Activated T-helper 1 cell treated with anti-CD3 and anti-CD28 coated beads, Interleukin-12 subunit alpha, Interleukin-12 subunit beta, Interleukin-2, Interleukin-4 antibody, amounts not matched to agents 30 ng/mL and 10 ng/mL and 1 ng/mL, durations not matched to agents 14 hours and 24 hours and 36 hours (primary cell): ENCODE measurements at regions of chr12 and their contacts with region 1.

Region 1: DNA sequence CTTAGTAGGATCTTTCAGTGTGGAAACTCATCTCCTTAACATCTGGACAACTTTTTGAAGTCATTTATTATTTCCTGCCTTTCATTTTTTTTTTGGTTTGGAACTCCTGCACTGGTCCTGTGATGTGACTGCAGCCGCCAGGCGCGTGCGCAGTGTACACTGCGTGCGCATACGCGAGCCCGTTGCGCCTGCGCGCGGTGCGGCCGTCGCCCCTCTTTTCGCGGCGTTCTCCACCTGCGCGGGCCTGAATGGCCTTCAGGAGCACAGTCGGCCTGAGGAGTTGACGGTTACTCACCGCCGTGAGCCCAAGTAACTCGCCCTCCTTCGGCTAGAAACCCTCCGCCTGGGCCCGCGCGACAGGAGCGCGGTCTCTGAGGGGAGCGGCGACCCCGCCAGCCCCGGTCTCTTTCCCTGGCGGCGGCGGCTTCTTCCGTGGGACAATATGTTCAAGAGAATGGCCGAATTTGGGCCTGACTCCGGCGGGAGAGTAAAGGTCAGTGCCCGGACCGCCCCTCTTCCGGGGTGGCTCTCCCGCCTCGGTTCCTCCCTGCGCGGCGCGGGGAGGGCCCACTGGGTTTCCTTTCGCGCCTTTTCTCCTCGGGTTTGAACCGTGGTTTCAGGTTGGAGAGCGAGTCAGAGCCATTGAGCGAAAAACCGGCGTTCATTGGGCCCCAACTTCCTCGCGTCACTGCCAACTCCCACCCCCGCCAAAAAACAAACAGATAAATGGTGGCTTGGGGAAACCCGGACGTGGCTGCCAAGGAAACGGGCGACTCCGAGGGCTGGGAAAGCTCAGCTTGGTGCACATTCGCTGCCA is at the start of gene YEATS4:
- DNase-seq: peak; percentile 88
- H3K4me3 Mint-ChIP-seq: peak within 1 kb of the TSS; percentile 94
- H3K27ac Mint-ChIP-seq: peak within 1 kb of the TSS; percentile 89
- H3K4me1 Mint-ChIP-seq: peaks cover 33% of the 10 kb centered on the region
- H3K27me3 Mint-ChIP-seq: peaks cover 3% of the 10 kb centered on the region
- total RNA-seq, gene YEATS4: 45.2 and 47.2 TPM in 2 replicates

Region 2: GRCh38 chr12:69239352-69239921 is 120.3 kb before region 1 on chr12 and contains the start of gene CPSF6:
- intact Hi-C with region 1: loop called (anchors 2 kb)
- DNase-seq: peak; percentile 94
- H3K4me3 Mint-ChIP-seq: peak within 1 kb of the TSS; percentile 100
- H3K27ac Mint-ChIP-seq: peak within 1 kb of the TSS; percentile 99
- H3K4me1 Mint-ChIP-seq: peaks cover 47% of the 10 kb centered on the region
- H3K27me3 Mint-ChIP-seq: peaks cover 7% of the 10 kb centered on the region
- total RNA-seq, gene CPSF6: 114 and 115 TPM in 2 replicates

Region 3: DNA sequence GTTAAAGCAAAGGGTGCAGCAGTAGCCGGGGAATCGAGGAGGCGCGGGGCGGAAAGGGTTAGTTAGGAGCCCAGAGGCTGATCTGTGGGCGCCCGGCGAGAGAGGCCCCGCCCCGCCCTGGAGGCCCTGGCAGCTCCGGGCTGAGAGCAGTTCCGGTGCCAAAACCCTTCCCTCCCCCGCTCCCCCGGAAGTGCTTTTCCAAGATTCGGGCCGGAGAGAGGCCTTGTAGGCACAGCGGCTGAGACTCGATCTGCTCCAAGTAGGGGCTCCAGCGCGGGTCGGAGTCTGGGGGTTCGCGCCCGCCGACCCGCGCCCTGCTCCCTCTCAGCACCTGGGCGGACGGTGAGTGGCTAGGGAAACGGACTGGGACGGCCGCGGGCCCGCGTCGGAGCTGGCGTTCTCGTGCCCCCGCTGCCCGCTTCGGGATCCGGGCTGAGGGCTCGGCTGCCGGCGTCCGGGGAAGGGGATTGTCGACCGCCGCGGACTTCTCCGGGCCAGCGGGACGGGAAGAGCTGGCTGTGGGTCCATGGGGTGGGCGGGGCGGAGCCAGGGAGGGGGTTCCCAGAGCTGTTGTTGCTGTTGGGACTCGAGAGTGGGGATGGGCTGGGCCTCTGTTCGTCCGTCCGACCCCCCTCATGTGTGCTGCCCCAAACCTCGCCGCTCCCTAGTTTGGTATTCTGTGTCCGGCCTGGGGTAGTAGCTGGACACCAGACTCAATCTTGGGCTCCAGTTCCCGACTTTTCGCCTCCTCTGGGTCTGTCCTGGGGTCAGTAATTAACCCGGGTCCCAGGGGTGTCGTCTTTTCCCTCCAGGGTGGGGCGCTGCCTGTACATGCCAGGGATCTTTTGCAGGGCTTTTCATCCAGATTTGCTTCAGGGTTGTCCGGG is 110.7 kb after region 1 on chr12 and contains the start of gene FRS2:
- intact Hi-C with region 1: loop called (anchors 1 kb)
- DNase-seq: peak; percentile 79
- H3K4me3 Mint-ChIP-seq: peak within 1 kb of the TSS; percentile 98
- H3K27ac Mint-ChIP-seq: peak within 1 kb of the TSS; percentile 97
- H3K4me1 Mint-ChIP-seq: peaks cover 50% of the 10 kb centered on the region
- H3K27me3 Mint-ChIP-seq: no peaks in the 10 kb centered on the region
- total RNA-seq, gene FRS2: 13.1 and 13.7 TPM in 2 replicates

Region 4: DNA sequence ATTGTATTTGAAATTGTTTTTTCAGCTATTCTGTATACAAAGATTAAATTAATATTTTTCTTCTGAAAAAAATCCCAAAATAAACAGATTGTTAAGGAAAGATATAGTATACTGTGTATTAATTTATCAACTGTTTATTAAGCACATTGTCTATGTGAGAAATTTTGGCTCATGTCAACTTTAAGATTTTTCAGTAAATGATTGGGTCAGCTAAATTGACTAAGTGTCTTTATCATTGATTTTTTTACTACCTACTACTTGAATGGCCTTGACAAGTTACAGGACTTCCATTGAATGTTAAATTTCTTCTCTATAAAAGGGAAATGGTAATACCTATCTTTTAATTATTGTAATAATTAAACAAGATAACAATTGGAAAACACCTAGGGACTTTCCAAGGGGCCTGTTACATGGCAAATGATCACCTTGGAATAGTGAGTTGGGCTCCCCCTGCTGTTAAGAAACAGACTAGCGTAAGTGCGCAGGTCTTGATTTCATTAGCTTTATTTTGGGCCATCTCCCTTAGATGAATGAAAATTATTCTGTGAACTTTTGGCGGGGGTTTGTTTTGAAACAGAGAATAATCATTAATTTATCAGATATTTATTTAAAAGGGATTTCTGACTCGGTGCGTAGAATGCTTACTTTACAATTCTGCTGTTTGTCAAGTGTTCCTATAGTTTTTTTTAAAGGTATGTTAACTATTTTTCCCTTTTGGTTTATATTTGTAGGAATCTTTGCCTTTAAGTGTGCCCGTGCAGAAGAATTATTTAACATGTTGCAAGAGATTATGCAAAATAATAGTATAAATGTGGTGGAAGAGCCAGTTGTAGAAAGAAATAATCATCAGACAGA is 211.0 kb after region 1 on chr12:
- intact Hi-C with region 1: loop called (anchors 1 kb)
- DNase-seq: peak; percentile 38
- H3K4me3 Mint-ChIP-seq: no peak overlapping the region
- H3K27ac Mint-ChIP-seq: no peak overlapping the region
- H3K4me1 Mint-ChIP-seq: peaks cover 10% of the 10 kb centered on the region
- H3K27me3 Mint-ChIP-seq: no peaks in the 10 kb centered on the region

Region 5: DNA sequence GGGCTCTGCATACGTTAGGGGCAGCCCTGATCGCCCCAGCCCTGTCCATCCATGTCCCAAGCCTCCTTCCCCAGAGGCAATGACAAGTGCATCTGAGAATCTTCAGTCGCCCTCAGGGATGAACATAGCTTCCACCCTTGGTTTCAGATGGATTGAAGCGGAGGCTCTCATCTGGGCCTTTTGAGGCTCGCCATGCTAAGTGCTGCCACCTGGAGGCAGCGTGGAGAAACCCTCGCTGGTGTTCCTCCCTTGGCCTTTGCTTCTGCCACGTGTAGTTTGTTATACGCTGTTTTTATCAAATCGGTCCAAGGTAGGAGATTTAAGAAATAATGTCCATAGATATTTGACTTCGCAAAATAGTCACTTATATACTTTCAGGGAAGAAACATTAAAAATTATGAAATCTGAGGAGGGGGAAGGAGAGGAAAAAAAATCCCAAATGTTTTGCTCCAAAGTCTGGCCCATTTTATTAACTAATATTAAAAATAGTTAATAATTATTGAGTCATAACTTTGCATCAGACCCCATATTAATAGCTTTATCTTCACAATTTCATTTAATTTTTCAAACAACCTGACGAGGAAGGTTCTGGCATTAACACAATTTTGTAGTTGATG is 279.8 kb after region 1 on chr12:
- intact Hi-C with region 1: loop called (anchors 1 kb)
- DNase-seq: peak; percentile 34
- H3K4me3 Mint-ChIP-seq: no peak overlapping the region
- H3K27ac Mint-ChIP-seq: no peak overlapping the region
- H3K4me1 Mint-ChIP-seq: peaks cover 4% of the 10 kb centered on the region
- H3K27me3 Mint-ChIP-seq: peaks cover 5% of the 10 kb centered on the region